Heart left ventricle (tissue), 16 donors: ENCODE measurements at regions of chr12 and their contacts with region 1.

Region 1: DNA sequence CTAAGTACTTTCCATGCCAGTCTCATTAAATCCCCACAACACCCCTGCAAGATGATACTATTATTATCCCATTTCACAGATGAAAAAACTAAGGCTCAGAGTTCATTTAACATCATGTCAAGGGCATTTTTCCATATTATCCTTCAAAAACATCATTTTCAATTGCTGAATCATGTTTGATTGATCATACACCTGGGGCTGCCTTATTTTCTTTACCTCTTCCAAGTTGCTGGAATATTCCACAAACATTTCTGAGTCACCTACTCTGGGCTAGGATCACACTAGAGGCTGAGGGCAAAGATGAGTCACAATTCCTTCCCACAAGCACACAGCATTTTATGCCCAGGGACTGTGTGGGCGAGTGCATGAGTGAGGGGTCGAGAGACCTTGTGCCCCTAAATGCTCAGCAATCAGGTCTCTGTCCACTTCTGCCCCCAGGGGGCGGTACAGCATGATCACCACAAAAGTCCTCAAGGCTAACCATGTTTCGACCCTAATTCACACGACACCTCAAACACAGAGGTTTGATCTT is 14.1 kb upstream of the TMEM119 start:
- DNase-seq: no peak
- ATAC-seq: peak in 1 of 4 donors; percentile 28
- H3K4me3 ChIP-seq: no peak overlapping the region
- H3K27ac ChIP-seq: no peak overlapping the region
- H3K4me1 ChIP-seq: peaks cover 0 to 29% (median 11%) of the 10 kb centered on the region in 12 donors
- H3K27me3 ChIP-seq: no peaks in the 10 kb centered on the region
- CTCF ChIP-seq: peak in 9 of 12 donors; percentile 17 to 50 (median 41)
- POLR2A ChIP-seq: no peak

Region 2: DNA sequence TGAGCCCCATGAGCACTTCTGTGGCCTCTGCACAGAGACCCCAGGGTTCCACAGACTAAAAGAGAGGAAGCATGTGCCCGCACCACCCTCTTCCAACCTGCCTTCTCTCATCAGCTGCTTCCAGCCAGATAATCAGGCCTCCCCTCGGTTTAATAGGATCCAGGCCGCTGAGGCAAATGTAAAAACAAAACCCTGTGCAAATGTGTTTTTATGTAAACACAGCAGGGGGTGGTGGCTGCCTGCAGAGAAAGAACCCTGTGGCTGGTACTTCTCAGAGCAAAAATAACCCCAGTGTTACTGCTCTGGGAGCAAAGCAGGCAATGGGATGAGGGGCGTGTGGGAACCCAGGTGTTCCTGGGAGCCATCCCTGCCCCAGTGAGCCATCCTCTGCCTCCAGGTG is 436.6 kb before region 1 on chr12:
- intact Hi-C with region 1: loop called in 1 of 10 experiments (anchors 10 kb)
- DNase-seq: no peak
- ATAC-seq: no peak
- H3K4me3 ChIP-seq: no peak overlapping the region
- H3K27ac ChIP-seq: no peak overlapping the region
- H3K4me1 ChIP-seq: no peaks in the 10 kb centered on the region
- H3K27me3 ChIP-seq: peaks cover 0 to 16% (median 0%) of the 10 kb centered on the region in 9 donors
- CTCF ChIP-seq: no peak
- POLR2A ChIP-seq: no peak

Region 3: GRCh38 chr12:108547686-108548085 is 64.3 kb before region 1 on chr12:
- intact Hi-C with region 1: no loop called
- DNase-seq: no peak
- ATAC-seq: peak; percentile 79 to 90 (median 84)
- H3K4me3 ChIP-seq: no peak overlapping the region
- H3K27ac ChIP-seq: peak overlapping the region in 7 of 12 donors; percentile 15 to 64 (median 22)
- H3K4me1 ChIP-seq: peaks cover 0 to 58% (median 24%) of the 10 kb centered on the region in 12 donors
- H3K27me3 ChIP-seq: no peaks in the 10 kb centered on the region
- CTCF ChIP-seq: no peak
- POLR2A ChIP-seq: no peak

Region 4: DNA sequence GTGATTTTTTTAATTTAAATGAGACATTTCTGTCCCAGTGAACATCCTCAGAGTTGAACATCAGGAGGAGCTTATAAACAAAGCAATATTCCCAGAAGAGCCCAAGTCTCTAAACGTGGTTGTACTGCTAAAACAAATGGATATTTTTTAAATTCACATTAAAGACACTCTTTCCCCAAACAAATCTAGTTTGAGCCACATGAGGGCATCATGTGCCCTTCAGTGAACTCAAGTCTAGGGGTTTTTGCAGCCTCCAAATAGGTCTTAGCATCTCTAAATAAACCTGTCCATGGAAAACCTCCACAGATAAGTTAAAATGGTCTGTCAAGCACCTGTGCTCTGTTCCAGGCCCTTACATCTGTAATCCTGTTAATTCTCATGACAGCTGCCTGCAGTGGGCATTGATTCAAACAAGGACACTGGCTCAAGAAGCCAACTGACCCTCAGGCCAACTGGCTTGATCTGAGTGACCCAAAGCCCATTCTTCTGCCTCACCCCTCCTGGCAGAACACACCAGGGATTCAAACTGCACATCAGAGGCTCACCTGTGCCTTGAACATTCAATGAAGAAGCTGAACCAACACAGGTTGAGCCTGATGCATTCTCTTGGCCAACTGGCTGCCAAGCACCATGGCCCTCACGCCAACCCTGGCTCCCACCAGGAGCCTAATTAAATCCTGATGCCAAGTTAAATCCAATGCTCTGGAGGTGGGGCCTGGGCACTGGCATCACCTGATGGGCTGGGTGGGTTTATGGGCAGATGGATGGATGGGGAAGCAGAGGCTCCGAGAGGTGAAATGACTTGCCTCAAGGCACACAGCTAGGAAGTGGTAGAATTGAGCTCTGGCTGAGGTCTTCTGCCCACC is 41.0 kb before region 1 on chr12:
- intact Hi-C with region 1: loop called in 2 of 10 experiments (anchors 2 to 5 kb)
- DNase-seq: peak in 1 of 5 donors; percentile 1
- ATAC-seq: no peak
- H3K4me3 ChIP-seq: no peak overlapping the region
- H3K27ac ChIP-seq: no peak overlapping the region
- H3K4me1 ChIP-seq: peaks cover 0 to 26% (median 12%) of the 10 kb centered on the region in 12 donors
- H3K27me3 ChIP-seq: no peaks in the 10 kb centered on the region
- CTCF ChIP-seq: peak in 9 of 12 donors; percentile 16 to 58 (median 37)
- POLR2A ChIP-seq: no peak

Region 5: DNA sequence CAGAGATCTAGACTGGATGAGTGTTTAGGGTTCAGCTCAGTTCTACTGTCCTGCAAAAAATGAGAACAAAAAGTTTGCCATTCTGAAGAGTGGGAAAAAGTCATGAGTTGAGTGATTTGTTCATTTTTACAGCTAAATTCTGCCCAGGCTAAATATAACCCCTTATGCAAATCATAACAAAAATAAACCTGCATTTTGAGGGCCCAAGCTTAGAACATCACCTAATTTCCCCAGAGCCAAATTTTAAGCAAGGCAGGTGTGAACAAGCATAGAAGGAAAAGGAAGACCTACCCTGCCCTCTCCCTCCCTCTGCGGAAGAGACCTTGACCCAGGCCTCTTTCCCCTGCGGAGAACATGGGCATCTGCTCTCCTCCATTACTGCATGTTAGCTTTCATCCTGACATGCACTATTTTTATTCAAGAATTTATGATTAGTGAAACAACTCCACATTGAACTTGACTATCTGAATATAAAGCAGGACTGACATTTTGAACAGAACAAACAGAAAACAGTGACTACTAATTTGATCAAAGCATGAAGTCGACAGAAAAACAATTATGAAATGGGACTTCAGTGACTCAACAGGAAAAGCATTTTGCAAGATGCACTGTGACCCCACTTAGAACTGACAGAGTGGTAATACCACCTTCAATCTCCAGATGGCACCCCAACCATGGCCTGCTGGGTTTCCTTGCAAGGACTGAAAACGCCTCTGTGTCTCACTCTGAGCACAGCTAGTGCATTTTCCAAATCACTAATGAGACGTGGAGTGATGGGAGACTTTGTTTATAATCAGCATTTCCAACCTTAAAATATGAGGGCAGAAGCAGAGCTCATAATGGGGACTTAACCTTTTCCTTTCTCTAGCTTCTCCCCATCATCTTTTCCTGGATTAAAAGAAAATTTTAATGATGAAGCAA is 52.6 kb after region 1 on chr12:
- intact Hi-C with region 1: no loop called
- DNase-seq: peak; percentile 76 to 87 (median 84)
- ATAC-seq: peak; percentile 85 to 93 (median 92)
- H3K4me3 ChIP-seq: peak overlapping the region in 1 of 12 donors; percentile 12
- H3K27ac ChIP-seq: peak overlapping the region; percentile 62 to 88 (median 80)
- H3K4me1 ChIP-seq: peaks cover 17 to 60% (median 50%) of the 10 kb centered on the region in 12 donors
- H3K27me3 ChIP-seq: no peaks in the 10 kb centered on the region
- CTCF ChIP-seq: peak; percentile 88 to 98 (median 96)
- POLR2A ChIP-seq: peak in 1 of 2 donors; percentile 28

Region 6: GRCh38 chr12:108980831-108981618 is 369.1 kb after region 1 on chr12:
- intact Hi-C with region 1: no loop called
- DNase-seq: peak in 4 of 5 donors; percentile 34 to 81 (median 64)
- ATAC-seq: peak; percentile 91 to 94 (median 92)
- H3K4me3 ChIP-seq: no peak overlapping the region
- H3K27ac ChIP-seq: peak overlapping the region in 2 of 12 donors; percentile 19 to 65
- H3K4me1 ChIP-seq: peaks cover 0 to 7% (median 0%) of the 10 kb centered on the region in 12 donors
- H3K27me3 ChIP-seq: no peaks in the 10 kb centered on the region
- CTCF ChIP-seq: no peak
- POLR2A ChIP-seq: no peak